Panc1 (cell line): ENCODE measurements at regions of chr11 and their contacts with region 1.

Region 1: GRCh38 chr11:129639300-129639699 is 176.3 kb upstream of the TMEM45B start:
- DNase-seq: peak; percentile 93
- ATAC-seq: peak; percentile 99
- H3K4me3 ChIP-seq: no peak overlapping the region
- H3K27ac ChIP-seq: peak overlapping the region; percentile 83
- H3K4me1 ChIP-seq: peaks cover 14% of the 10 kb centered on the region
- H3K27me3 ChIP-seq: no peaks in the 10 kb centered on the region
- CTCF ChIP-seq: no peak

Region 2: GRCh38 chr11:129414144-129414872 is 225.0 kb before region 1 on chr11:
- CTCF ChIA-PET with region 1: interaction called, 12 read pairs
- POLR2A ChIA-PET with region 1: no interaction called
- in situ Hi-C with region 1: no loop called
- intact Hi-C with region 1: no loop called
- DNase-seq: no peak
- ATAC-seq: no peak
- H3K4me3 ChIP-seq: no peak overlapping the region
- H3K27ac ChIP-seq: no peak overlapping the region
- H3K4me1 ChIP-seq: no peaks in the 10 kb centered on the region
- H3K27me3 ChIP-seq: no peaks in the 10 kb centered on the region
- CTCF ChIP-seq: no peak